ENCODE measurements at regions of chr10 and their contacts with region 1.

Region 1: GRCh38 chr10:44051584-44052385 is 333.1 kb downstream of the CXCL12 start:
- DNase-seq: no peak
- ATAC-seq: peak in 1 of 4 donors; percentile 34
- H3K4me3 ChIP-seq: no peak overlapping the region
- H3K27ac ChIP-seq: no peak overlapping the region
- H3K4me1 ChIP-seq: peaks cover 0 to 6% (median 0%) of the 10 kb centered on the region in 12 donors
- H3K27me3 ChIP-seq: no peaks in the 10 kb centered on the region
- CTCF ChIP-seq: no peak
- POLR2A ChIP-seq: no peak

Region 2: DNA sequence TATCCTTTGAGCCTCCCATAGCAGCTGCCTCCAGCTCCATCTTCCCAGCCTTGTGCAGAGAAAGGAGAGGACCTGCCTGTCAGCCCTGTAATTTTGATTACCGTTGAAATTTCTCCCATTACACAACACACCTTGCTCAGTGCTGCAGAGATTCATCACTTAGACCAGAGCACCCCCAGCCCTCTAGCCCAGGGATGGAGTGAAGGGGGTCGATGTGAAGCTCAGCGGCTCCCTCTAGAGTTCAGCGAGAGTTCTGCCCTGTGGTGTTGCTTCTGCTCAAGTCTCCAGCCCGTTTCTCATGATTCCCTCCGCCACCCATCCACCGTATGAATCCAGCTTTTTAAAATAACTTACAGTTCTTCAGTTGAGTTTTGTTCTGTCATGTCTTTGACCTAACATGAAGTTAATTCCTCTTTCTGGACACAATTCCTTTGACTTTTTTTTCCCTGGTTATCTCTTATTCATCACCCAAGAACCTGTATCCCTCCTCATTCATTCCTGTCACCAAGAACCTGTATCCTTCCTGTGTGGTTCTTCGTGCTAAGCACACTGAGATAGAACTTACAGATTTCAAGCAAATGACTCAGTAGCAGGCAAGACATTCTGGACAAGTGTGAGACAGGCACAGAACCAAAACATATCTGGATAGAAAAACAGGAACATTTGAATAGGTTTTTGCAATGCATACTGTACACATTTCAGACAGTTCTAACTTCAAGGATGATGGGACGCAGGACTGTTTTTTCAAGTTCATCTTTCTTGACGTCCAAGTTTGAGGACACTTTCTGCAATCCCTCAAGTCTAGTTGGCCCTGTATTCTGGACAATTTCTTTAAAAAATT is 368.1 kb before region 1 on chr10:
- intact Hi-C with region 1: loop called in 4 of 10 experiments (anchors 5 to 10 kb)
- DNase-seq: no peak
- ATAC-seq: no peak
- H3K4me3 ChIP-seq: no peak overlapping the region
- H3K27ac ChIP-seq: peak overlapping the region in 1 of 12 donors; percentile 20
- H3K4me1 ChIP-seq: peaks cover 0 to 34% (median 13%) of the 10 kb centered on the region in 12 donors
- H3K27me3 ChIP-seq: no peaks in the 10 kb centered on the region
- CTCF ChIP-seq: peak in 8 of 12 donors; percentile 16 to 43 (median 34)
- POLR2A ChIP-seq: no peak

Region 3: GRCh38 chr10:44552726-44553125 is 500.9 kb after region 1 on chr10:
- intact Hi-C with region 1: no loop called
- DNase-seq: no peak
- ATAC-seq: no peak
- H3K4me3 ChIP-seq: no peak overlapping the region
- H3K27ac ChIP-seq: no peak overlapping the region
- H3K4me1 ChIP-seq: no peaks in the 10 kb centered on the region
- H3K27me3 ChIP-seq: no peaks in the 10 kb centered on the region
- CTCF ChIP-seq: no peak
- POLR2A ChIP-seq: no peak